ENCODE measurements at regions of chr10 and their contacts with region 1.

Region 1: DNA sequence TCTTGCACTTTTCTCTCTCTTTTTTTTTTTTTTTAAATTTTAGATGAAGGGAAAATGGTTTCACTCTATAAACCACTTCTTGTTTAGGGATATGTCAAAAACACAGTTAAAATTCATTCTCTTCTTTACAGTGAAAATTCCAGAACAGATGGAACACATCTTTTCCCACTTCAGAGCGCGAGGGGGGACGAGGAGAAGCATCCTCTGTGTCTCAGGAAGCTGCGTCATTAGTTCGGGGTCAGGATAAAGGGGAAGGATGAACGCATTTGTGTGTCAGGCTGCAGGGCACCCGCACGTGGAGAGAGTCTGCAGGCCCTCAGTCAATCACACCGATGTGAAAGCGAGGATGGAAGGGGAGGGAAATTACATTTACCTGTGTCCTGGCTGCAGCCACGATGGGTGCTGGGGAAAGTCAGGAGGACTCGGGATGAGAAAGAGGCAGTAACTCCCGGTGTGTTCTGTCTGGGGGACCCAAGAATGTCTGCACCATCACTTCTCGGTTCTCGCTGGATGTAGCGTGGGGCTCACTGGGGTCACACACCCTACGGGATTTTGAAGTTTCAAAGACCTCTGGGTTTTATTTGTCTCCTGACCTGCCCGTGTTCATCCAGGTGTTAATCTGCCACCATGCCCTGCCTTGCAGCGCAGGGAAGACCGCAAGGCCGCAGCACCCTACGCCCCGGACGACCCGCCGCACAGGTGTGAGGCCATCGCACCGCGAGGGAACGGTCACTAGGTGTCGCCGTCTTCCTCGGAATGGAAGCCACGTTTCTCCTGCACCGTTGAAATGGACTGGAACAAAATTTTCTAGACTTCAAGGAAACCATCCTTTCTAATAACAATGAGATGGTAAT is 66.7 kb upstream of the PITRM1 start:
- DNase-seq: peak; percentile 82 to 92
- ATAC-seq: peak; percentile 87
- H3K4me3 ChIP-seq: no peak overlapping the region
- H3K27ac ChIP-seq: no peak overlapping the region
- H3K4me1 ChIP-seq: no peaks in the 10 kb centered on the region
- H3K27me3 ChIP-seq: no peaks in the 10 kb centered on the region

Region 2: DNA sequence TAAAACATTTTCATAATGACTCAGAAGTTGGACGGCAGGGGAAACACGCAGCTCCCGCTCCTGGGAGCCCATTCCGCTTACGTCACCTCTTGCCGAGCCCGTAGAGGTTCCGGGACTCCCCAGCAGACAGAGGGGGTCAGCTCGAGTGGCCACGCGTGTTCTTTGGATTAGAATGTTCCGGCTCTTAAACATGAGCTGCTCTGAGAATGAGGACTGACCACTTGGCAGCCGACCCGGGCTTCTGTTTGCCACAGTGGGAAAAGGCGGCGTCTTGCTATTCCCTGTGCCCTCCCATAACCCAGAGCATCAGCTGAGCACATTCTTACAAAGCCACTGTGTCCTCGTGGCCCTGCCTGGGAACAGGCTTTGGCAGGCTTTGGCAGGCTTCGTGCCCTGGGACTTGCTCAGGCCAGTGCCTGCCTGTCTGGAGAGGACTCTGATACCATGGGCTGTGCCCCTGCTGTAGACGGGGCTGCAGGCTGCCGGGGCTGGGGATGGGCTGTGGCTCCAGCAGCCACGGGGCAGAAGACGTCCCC is 131.8 kb before region 1 on chr10:
- intact Hi-C with region 1: no loop called
- DNase-seq: peak; percentile 94 to 96
- ATAC-seq: peak; percentile 90
- H3K4me3 ChIP-seq: no peak overlapping the region
- H3K27ac ChIP-seq: peak overlapping the region; percentile 63 to 66
- H3K4me1 ChIP-seq: no peaks in the 10 kb centered on the region
- H3K27me3 ChIP-seq: no peaks in the 10 kb centered on the region

Region 3: GRCh38 chr10:3287572-3288445 is 48.5 kb after region 1 on chr10:
- intact Hi-C with region 1: no loop called
- DNase-seq: no peak
- ATAC-seq: no peak
- H3K4me3 ChIP-seq: no peak overlapping the region
- H3K27ac ChIP-seq: no peak overlapping the region
- H3K4me1 ChIP-seq: no peaks in the 10 kb centered on the region
- H3K27me3 ChIP-seq: no peaks in the 10 kb centered on the region

Region 4: DNA sequence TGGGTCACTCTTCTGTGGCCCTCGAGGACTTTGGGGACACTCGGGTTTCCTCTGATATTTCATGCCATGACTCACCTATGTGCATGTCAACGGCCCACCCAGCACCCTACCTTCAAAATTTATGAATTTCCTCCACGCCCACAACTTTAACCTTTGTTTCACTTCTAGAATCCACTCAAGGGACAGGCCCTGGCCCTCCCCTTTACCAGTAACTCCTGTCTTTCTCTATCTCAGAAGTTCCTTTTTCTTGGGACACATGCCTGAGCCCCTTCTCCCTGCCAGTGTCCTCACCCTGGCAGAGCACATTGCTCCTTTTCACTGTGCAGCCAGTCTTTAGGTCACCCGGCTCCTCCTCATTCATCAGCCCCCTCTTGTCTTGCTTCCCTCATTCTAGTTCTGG is 828.2 kb after region 1 on chr10:
- intact Hi-C with region 1: loop called in 1 of 2 experiments (anchors 10 kb)
- DNase-seq: no peak
- ATAC-seq: no peak
- H3K4me3 ChIP-seq: no peak overlapping the region
- H3K27ac ChIP-seq: no peak overlapping the region
- H3K4me1 ChIP-seq: no peaks in the 10 kb centered on the region
- H3K27me3 ChIP-seq: no peaks in the 10 kb centered on the region

Region 5: GRCh38 chr10:4234661-4235060 is 995.4 kb after region 1 on chr10:
- intact Hi-C with region 1: loop called in 1 of 2 experiments (anchors 10 kb)
- DNase-seq: no peak
- ATAC-seq: no peak
- H3K4me3 ChIP-seq: no peak overlapping the region
- H3K27ac ChIP-seq: no peak overlapping the region
- H3K4me1 ChIP-seq: no peaks in the 10 kb centered on the region
- H3K27me3 ChIP-seq: no peaks in the 10 kb centered on the region

Region 6: GRCh38 chr10:4663162-4663904 is 1424.0 kb after region 1 on chr10:
- intact Hi-C with region 1: loop called (anchors 10 kb)
- DNase-seq: peak in 1 of 2 donors; percentile 67
- ATAC-seq: peak; percentile 93
- H3K4me3 ChIP-seq: peak overlapping the region in 1 of 2 donors; percentile 10
- H3K27ac ChIP-seq: peak overlapping the region; percentile 89 to 95
- H3K4me1 ChIP-seq: peaks cover 0 to 7% of the 10 kb centered on the region in 2 donors
- H3K27me3 ChIP-seq: no peaks in the 10 kb centered on the region